ENCODE measurements at regions of chr16 and their contacts with region 1.

Region 1: GRCh38 chr16:24041826-24042631 is 206.2 kb downstream of the PRKCB start:
- DNase-seq: no peak
- ATAC-seq: peak; percentile 54

Region 2: DNA sequence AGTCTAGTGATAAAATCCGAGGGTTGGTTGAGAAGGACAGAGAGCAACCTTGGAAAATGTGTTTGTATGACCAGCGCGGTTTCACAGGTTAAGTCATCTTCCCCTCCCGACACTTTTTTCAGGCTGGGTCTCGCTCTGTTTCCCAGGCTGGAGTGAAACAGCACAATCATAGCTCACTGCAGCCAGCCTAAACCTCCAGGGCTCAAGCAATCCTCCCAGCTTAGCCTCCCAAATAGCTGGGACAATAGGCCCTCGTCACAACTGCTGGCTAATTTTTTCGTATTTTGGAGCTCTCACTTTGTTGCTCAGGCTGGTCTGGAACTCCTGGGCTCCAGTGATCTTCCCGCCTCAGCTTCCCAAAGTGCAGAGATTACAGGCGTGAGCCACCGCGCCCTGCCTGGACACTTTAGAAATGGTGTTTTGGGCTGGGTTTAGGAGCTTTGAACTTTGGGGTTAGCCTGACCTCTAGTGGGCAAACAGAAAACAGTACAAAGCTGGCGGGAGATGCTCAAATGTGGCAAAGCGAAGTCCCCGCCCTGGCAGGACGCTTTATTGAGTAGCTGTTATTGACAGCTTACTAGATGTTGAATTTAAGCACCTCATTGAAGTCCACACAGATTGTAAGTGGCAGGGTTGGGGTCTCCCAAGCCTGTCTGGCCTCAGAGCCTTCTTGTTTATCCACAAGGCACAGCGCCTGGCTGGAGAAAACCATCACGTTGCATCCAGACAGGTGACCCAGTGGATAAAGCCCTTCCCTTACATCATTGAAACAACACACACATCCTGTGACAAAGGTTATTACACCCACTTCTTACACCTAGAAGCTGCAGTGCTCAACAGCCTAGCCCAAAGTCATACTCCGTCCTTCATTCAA is 462.7 kb after region 1 on chr16:
- intact Hi-C with region 1: loop called (anchors 2 kb)
- DNase-seq: no peak
- ATAC-seq: peak; percentile 69

Measured in Right ventricle myocardium inferior (tissue), 1 donor.